ENCODE measurements at regions of chr5 and their contacts with region 1.

Region 1: GRCh38 chr5:74640450-74640953 is at the start of gene ENC1:
- DNase-seq: peak; percentile 94
- total RNA-seq, gene ENC1: 6.6 TPM

Region 2: GRCh38 chr5:73792687-73793320 is 847.7 kb before region 1 on chr5:
- intact Hi-C with region 1: loop called (anchors 10 kb)
- DNase-seq: no peak

Region 3: DNA sequence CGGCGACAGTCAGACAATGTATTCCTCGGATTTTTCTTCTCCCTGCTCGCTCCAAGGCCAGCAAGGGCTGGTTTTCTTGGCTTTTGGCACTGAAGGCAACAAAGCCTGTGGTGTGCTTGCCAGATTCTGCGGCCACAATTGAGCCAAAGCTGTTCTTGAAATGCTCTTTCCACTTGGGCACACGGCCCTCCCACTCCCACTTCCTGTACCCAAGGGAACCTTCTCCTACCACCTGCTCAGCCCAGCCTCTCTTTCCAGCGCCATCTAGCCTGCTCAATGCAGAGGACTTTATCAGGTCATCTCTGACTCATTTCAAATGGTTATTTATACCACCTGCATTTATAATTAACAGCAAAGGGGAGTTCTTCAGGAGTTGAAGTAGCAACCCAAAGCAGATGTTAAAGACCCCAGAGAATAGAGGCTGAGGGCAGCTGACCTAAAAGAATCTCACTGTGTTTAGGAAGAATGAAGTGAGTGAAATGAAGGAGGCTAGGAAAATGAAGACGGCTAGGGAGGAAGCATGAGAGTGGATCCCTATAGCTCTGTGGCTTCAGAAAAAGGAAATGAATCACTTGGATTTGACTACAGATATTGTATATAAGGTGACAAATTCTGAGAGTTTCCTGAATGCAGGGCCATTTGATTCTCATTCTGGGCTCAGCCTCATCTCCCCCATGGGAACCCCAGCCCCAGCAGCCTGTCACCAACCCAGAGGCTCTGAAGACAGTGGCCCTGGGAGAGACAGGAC is 439.0 kb before region 1 on chr5:
- intact Hi-C with region 1: loop called (anchors 5 kb)
- DNase-seq: no peak

Region 4: DNA sequence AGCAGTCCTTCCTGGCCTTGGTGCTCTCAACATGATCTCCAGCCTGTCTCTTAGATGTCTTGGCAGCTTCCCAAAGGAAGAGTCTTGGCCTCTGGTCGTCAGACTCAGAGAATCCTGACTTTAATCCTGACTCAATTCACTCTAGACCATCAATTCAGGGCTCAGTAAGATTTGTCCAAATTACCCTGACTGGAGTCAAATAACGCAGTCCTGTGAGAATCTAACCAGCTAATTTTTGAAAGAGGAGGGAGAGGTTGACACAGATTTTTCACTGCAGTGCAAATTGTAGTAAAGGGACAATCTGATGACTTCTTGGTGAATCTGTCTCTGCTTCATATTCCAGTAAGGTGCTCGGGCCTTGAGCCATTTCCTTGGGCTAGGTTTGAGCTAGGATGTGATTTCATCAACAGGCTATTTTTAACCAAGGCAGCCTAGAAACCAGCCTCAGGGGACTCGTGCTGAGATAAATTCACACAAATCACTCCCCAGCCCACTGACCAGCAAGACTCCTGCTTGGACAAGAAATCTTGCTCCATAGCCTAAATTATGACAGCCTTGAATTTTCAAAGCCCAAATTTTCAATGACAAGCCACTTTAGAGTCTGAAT is 257.4 kb before region 1 on chr5:
- intact Hi-C with region 1: loop called (anchors 5 kb)
- DNase-seq: no peak

Region 5: GRCh38 chr5:74538206-74538661 is 102.3 kb before region 1 on chr5:
- intact Hi-C with region 1: loop called (anchors 2 kb)
- DNase-seq: peak; percentile 81

Region 6: GRCh38 chr5:74622122-74622521 is 18.4 kb before region 1 on chr5:
- intact Hi-C with region 1: no loop called
- DNase-seq: no peak

Region 7: GRCh38 chr5:74766849-74767578 is 126.5 kb after region 1 on chr5 and contains the starts of genes GFM2 and NSA2:
- intact Hi-C with region 1: no loop called
- DNase-seq: peak; percentile 97
- total RNA-seq, gene GFM2: 45.2 TPM
- total RNA-seq, gene NSA2: 34.2 TPM

Region 8: DNA sequence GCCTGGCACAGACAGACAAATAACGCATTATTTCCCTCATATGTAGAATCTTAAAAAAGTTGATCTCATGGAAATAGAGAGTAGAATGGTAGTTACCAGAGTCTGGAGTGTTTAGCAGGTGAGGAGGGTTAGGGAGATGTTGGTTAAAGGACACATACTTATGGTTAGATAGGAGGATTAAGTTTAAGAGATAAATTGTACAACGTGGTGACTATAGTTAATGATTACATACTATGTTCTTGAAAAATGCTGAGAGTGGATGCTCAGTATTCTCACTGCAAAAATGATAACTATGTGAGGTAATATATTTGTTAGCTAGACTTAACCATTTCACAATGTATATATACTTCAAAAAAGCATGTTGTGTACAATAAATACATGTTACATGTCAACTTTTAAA is 833.0 kb after region 1 on chr5:
- intact Hi-C with region 1: no loop called
- DNase-seq: no peak